GM12878 (cell line): ENCODE measurements at regions of chr4 and their contacts with region 1.

Region 1: DNA sequence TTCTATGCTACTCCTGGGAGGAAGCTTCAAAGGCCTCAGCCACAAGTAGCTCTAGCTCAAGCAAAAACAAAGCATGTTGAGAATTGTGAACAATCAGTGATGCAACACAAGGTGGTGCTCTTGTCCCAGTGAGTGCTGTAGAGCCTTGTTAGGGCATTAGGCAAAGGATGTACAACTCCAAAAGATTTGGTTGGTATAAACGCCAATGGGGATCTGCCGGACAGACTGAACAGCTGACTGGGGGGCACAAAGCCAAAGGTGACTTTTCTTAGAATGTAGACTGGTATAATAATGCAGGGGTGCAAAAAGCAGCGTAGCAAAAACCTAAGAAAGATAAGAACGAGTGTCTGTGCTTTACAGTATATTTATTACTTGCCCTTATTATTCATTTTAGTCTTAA is 62.6 kb upstream of the ALB start:
- DNase-seq: peak; percentile 16
- ATAC-seq: peak; percentile 90
- H3K4me3 ChIP-seq: no peak overlapping the region
- H3K27ac ChIP-seq: no peak overlapping the region
- H3K4me1 ChIP-seq: no peaks in the 10 kb centered on the region
- H3K27me3 ChIP-seq: no peaks in the 10 kb centered on the region
- CTCF ChIP-seq: peak; percentile 44 to 71 (median 57); a peak in 4 of 6 replicates
- EP300 ChIP-seq: no peak
- POLR2A ChIP-seq: no peak
- RAD21 ChIP-seq: peak; percentile 82

Region 2: GRCh38 chr4:73434311-73434710 is 92.9 kb after region 1 on chr4:
- CTCF ChIA-PET with region 1: interaction called, 5 read pairs
- POLR2A ChIA-PET with region 1: no interaction called
- RAD21 ChIA-PET with region 1: interaction called, 4 read pairs
- SMC1A ChIA-PET with region 1: interaction called, 6 read pairs
- in situ Hi-C with region 1: no loop called
- intact Hi-C with region 1: loop called (anchors 1 kb)
- DNase-seq: no peak
- ATAC-seq: peak; percentile 66
- H3K4me3 ChIP-seq: no peak overlapping the region
- H3K27ac ChIP-seq: no peak overlapping the region
- H3K4me1 ChIP-seq: no peaks in the 10 kb centered on the region
- H3K27me3 ChIP-seq: no peaks in the 10 kb centered on the region
- CTCF ChIP-seq: peak; percentile 38 to 55 (median 54); a peak in 5 of 6 replicates
- EP300 ChIP-seq: no peak
- POLR2A ChIP-seq: no peak
- RAD21 ChIP-seq: peak; percentile 27; the same call in 1 of the 2 replicates